AG04449 (cell line): ENCODE measurements at regions of chr4 and their contacts with region 1.

Region 1: GRCh38 chr4:4555916-4556315 is 14.1 kb upstream of the STX18 start:
- DNase-seq: peak; percentile 86
- H3K4me3 ChIP-seq: no peak overlapping the region
- CTCF ChIP-seq: no peak

Region 2: DNA sequence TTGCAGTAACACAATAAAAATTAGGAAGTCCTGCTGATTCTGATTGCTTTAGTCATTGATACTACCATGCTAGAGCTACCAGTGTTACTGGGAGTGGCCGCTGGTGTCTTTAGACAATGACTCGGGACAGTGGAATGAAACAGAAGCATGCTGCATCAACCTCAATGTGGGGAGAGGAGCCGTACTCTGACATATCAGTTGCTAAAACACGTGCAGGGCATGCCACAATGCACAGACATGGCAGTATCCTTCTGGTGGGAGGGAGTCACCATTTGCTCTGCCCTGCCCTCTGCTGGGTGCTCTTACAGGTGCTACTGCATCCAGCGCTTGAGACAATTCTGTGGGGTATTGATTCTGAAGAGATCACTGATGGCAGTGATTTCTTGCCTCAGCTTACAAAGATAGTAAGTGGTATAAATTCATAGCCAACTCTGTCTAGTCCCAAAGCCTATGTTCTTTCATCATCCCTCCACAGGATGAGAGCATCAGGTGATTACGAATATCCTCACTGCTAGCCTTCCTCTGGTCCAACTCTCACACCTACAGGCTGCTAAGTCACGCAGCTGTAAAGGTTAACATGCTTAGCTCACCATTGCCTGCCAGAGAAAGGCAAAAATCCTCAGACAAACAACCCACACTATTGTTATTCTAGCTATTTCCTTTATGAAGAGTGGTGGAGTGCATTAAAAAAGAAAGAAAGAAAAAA is 125.3 kb before region 1 on chr4:
- CTCF ChIA-PET with region 1: no interaction called
- POLR2A ChIA-PET with region 1: no interaction called
- DNase-seq: peak; percentile 58
- H3K4me3 ChIP-seq: no peak overlapping the region
- CTCF ChIP-seq: peak; percentile 86

Region 3: DNA sequence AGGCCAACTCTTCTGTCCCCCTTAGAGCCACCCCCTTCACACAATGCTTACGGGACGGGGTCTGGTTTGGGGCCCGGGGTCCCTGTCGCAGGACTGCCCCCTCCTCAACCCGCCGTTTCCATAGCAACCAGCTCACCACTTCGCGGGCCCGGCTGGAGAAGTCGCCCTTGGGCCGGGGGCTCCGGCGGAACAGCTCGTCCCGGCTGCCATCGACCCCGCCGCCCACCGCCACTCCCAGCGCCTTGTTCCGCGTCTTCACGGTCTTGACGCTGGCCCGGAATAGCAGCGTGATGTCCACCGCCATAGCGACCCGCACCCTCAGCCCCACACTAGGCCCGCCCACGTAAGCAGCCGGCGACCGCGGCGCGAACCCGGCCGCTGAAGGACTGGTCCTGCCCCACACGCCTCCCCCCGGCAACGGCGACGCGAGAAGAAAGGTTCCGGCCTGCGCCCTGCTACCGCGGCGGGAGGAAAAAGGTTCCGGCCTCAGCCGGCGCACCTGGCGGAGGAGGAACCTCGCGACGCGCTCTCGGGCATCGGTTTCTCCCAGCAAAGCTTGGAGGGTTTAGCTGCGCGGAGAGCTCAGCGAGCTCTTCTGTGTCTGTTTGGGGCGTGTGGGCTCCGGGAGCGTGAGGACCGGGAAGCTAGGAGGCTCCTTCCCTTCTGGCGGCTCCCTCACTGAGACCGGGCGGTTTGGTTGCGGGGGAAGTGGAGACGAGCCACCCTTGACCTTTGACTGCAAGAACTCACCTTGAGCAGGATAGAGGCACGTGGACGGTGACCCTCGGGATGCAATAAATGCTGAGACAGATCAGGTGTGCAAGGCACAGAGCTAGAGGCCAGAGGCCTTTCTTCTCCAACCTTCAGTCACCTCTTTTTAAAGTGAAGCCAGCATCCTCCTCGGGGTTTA is 14.0 kb before region 1 on chr4 and contains the start of gene STX18:
- CTCF ChIA-PET with region 1: interaction called, 24 read pairs
- POLR2A ChIA-PET with region 1: interaction called, 7 read pairs
- DNase-seq: peak; percentile 24
- H3K4me3 ChIP-seq: peak within 1 kb of the TSS; percentile 84
- CTCF ChIP-seq: no peak

Region 4: GRCh38 chr4:4575273-4576211 is 19.6 kb after region 1 on chr4:
- CTCF ChIA-PET with region 1: interaction called, 38 read pairs
- POLR2A ChIA-PET with region 1: interaction called, 10 read pairs
- DNase-seq: no peak
- H3K4me3 ChIP-seq: peak overlapping the region; percentile 60
- CTCF ChIP-seq: peak; percentile 43